ENCODE measurements at regions of chr2 and their contacts with region 1.

Region 1: GRCh38 chr2:189086710-189087109 is 92.9 kb downstream of the COL5A2 start:
- DNase-seq: no peak
- H3K4me3 ChIP-seq: no peak overlapping the region
- H3K27ac ChIP-seq: no peak overlapping the region
- H3K4me1 ChIP-seq: peaks cover 0 to 14% (median 0%) of the 10 kb centered on the region in 4 donors
- H3K27me3 ChIP-seq: no peaks in the 10 kb centered on the region
- CTCF ChIP-seq: no peak
- EP300 ChIP-seq: no peak
- POLR2A ChIP-seq: no peak

Region 2: DNA sequence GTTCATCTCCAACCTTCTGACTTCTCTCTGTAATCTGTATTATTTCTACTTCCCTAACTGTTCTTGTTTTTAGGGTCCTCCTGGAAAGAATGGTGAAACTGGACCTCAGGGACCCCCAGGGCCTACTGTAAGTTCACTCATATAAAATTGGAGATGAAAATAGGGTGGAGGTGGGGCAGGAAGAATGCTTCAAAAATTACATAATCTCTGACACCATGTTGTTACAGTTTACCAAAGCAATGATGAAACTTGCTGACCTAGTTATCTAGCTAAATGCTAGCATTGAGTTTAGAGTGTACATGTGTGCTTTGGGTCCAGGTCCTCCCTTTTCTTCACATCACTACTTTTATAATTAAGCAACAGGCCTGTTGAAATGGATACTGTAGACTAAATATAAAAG is 89.4 kb before region 1 on chr2:
- in situ Hi-C with region 1: no loop called
- intact Hi-C with region 1: loop called (anchors 10 kb)
- DNase-seq: no peak
- H3K4me3 ChIP-seq: no peak overlapping the region
- H3K27ac ChIP-seq: peak overlapping the region in 2 of 4 donors; percentile 6 to 59
- H3K4me1 ChIP-seq: no peaks in the 10 kb centered on the region
- H3K27me3 ChIP-seq: no peaks in the 10 kb centered on the region
- CTCF ChIP-seq: no peak
- EP300 ChIP-seq: no peak
- POLR2A ChIP-seq: no peak

Region 3: GRCh38 chr2:189402932-189403331 is 316.2 kb after region 1 on chr2:
- in situ Hi-C with region 1: no loop called
- intact Hi-C with region 1: no loop called
- DNase-seq: no peak
- H3K4me3 ChIP-seq: no peak overlapping the region
- H3K27ac ChIP-seq: no peak overlapping the region
- H3K4me1 ChIP-seq: peaks cover 0 to 5% (median 1%) of the 10 kb centered on the region in 4 donors
- H3K27me3 ChIP-seq: no peaks in the 10 kb centered on the region
- CTCF ChIP-seq: no peak
- EP300 ChIP-seq: no peak
- POLR2A ChIP-seq: no peak

Measured in transverse colon (tissue), 4 donors.